ENCODE measurements at regions of chr7 and their contacts with region 1.

Region 1: GRCh38 chr7:131654668-131655326 is 98.4 kb upstream of the PODXL start:
- DNase-seq: peak; percentile 91
- H3K4me3 Mint-ChIP-seq: no peak overlapping the region
- H3K27ac Mint-ChIP-seq: no peak overlapping the region
- H3K4me1 Mint-ChIP-seq: no peaks in the 10 kb centered on the region
- H3K27me3 Mint-ChIP-seq: peaks cover 3% of the 10 kb centered on the region

Region 2: DNA sequence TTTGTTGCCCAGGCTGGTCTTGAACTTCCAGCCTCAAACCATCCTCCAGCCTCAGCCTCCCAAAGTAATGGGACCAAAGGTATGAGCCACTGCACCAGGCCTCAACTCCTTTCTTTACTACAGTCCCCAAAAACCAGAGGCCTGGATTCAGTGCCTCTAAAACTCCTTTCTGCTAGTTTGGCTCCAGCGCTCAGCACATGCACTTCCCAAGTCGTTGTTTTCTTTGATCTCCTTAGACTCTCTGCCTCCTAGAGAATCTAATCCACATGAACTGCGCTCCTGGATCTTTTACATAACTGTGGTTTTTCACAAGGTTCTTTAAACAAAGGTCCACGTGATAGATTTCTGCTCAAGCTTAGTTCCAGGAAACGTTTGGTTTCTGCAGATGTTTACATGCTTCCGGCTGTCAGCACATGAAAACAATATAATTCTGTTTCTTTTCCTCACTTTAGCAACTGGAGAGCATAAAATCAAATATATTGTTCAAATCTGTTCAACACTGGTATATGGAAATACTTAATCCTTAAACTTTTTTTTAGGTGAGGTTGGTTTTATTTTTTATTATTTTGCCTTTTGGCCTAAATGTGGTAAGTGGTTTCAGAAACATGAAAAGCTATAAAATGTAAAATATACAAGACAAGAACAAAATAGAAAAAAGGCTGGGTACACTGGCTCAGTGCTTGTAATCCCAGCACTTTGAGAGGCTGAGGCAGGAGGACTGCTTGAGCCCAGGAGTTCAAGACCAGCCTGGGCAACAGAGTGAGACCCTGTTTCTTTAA is 597.6 kb before region 1 on chr7:
- CTCF ChIA-PET with region 1: no interaction called
- intact Hi-C with region 1: loop called (anchors 10 kb)
- DNase-seq: peak; percentile 43
- H3K4me3 Mint-ChIP-seq: peak overlapping the region; percentile 66
- H3K27ac Mint-ChIP-seq: peak overlapping the region; percentile 98
- H3K4me1 Mint-ChIP-seq: peaks cover 65% of the 10 kb centered on the region
- H3K27me3 Mint-ChIP-seq: no peaks in the 10 kb centered on the region

Region 3: GRCh38 chr7:131507592-131508331 is 147.0 kb before region 1 on chr7:
- CTCF ChIA-PET with region 1: interaction called, 13 read pairs
- intact Hi-C with region 1: loop called (anchors 1 kb)
- DNase-seq: peak; percentile 91
- H3K4me3 Mint-ChIP-seq: no peak overlapping the region
- H3K27ac Mint-ChIP-seq: no peak overlapping the region
- H3K4me1 Mint-ChIP-seq: peaks cover 22% of the 10 kb centered on the region
- H3K27me3 Mint-ChIP-seq: peaks cover 8% of the 10 kb centered on the region

Region 4: DNA sequence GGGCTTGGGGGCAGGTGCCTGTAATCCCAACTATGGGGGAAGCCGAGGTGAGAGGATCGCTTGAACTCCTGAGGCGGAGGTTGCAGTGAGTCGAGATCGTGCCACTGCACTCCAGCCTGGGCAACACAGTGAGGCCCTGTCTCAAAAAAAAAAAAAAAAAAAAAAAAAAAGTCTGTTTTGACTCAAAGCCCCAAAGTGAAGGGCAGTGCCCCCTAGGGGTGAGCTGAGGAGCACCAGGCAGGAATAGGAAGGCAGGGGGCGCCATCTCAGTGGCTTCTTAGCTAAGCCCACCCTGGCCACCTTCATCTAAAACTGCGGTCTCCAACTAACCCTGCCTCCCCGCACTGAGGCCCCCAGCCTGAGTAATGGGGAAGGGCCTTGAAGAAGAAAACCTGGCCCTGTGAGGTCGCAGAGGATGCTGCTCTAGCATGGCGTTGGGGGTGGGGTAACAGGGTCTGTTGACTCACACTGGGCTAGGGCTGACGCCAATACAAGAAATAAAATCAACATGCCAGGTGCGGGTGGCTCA is 108.2 kb before region 1 on chr7:
- CTCF ChIA-PET with region 1: interaction called, 3 read pairs
- intact Hi-C with region 1: loop called (anchors 1 kb)
- DNase-seq: peak; percentile 72
- H3K4me3 Mint-ChIP-seq: no peak overlapping the region
- H3K27ac Mint-ChIP-seq: no peak overlapping the region
- H3K4me1 Mint-ChIP-seq: no peaks in the 10 kb centered on the region
- H3K27me3 Mint-ChIP-seq: peaks cover 5% of the 10 kb centered on the region

Region 5: DNA sequence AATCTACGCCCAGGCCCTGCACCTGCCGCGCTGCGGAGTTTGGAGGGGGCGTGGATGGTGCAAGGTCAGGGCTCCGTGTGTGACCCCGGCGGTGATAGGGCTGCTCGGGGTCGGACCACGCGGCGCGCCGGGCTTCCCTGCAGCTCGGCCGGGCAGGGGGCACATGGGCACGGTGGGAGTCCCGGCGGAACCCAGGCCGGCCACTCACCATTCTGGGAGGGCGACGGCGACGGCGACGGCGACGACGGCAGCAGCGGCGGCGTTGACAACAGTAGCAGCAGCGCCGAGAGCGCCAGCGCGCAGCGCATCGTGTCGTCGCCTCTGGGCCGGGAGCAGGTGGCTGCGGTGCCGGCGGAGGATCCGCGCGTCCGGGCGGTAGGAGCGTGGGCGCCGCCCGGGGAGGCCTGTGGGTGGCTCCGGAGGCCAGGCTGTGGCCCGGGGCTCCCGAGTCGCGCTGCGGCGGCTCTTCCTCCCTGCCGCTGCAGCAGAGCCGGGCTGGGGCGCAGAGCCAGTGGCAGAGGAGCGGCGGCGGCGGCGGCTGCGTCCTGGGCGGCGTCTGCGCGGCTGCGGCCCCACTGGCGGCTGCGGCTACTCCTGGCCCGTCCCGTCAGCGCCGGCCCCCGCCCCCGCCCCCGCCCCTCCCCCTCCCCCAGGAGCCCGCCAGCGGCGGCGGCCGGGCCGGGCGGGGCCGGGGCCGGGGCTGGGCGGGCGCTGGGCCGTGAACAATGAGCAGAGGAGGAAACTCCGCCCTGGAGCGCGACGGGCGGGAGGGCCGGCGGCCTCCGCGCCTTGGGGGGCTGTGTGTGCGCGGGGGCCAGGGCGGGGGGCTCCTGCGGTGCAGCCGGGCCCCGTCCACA is 98.5 kb before region 1 on chr7 and contains the start of gene PODXL:
- CTCF ChIA-PET with region 1: interaction called, 3 read pairs
- intact Hi-C with region 1: loop called (anchors 1 kb)
- DNase-seq: peak; percentile 60
- H3K4me3 Mint-ChIP-seq: peak within 1 kb of the TSS; percentile 67
- H3K27ac Mint-ChIP-seq: no peak within 1 kb of the TSS
- H3K4me1 Mint-ChIP-seq: peaks cover 12% of the 10 kb centered on the region
- H3K27me3 Mint-ChIP-seq: peaks cover 52% of the 10 kb centered on the region
- total RNA-seq, gene PODXL: 0.98 to 1.8 TPM

Region 6: DNA sequence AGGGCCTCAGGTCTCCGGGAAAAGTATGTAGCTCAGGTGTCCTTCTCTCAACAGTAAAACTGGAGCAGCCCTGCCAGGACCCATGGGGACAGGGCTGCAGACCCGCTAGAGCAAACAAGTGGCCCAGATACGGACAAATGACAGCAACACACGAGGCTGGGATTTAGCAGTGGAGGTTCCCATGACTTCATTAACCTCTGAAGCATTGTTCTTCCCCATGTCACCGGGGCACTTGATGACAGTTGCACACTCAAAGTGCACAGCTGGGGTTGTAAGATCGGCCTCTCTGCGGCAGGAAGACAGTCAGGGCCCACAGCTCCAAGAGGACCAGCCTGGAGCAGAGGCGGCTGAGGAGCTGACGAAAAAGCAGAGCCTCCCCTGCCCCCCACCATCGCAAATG is 85.8 kb before region 1 on chr7:
- CTCF ChIA-PET with region 1: no interaction called
- intact Hi-C with region 1: no loop called
- DNase-seq: no peak
- H3K4me3 Mint-ChIP-seq: no peak overlapping the region
- H3K27ac Mint-ChIP-seq: no peak overlapping the region
- H3K4me1 Mint-ChIP-seq: no peaks in the 10 kb centered on the region
- H3K27me3 Mint-ChIP-seq: no peaks in the 10 kb centered on the region

Region 7: DNA sequence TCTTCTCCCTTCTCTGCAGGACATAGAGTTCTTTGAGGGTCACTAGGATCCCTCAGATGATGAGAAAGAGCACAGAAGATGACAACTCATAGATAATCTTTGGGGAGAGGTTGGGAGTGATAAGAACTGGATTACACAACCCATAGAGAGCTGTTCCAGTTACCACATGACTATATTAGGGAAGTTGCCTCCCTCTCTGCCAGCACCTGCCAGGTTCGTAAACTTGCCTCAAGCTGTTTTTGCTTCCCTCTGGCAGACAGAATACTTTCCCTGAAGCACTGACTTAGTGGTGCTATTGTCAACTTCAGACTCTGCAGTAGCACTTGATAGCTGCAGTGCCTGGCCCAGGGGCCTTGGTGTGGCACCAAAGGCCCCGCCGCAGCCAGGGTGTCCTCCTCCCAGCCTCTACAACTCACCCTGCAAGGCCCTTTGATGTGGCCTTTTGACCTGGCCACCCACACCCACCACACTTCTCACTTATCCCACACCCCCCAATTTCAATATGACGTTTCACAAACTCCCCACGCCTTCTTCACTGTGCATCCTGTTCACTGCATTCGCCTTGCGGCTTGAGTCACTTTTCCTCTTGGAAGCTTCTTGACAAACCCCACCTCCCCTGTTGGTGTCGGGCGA is 48.4 kb before region 1 on chr7:
- CTCF ChIA-PET with region 1: no interaction called
- intact Hi-C with region 1: no loop called
- DNase-seq: no peak
- H3K4me3 Mint-ChIP-seq: no peak overlapping the region
- H3K27ac Mint-ChIP-seq: no peak overlapping the region
- H3K4me1 Mint-ChIP-seq: no peaks in the 10 kb centered on the region
- H3K27me3 Mint-ChIP-seq: peaks cover 5% of the 10 kb centered on the region

Region 8: DNA sequence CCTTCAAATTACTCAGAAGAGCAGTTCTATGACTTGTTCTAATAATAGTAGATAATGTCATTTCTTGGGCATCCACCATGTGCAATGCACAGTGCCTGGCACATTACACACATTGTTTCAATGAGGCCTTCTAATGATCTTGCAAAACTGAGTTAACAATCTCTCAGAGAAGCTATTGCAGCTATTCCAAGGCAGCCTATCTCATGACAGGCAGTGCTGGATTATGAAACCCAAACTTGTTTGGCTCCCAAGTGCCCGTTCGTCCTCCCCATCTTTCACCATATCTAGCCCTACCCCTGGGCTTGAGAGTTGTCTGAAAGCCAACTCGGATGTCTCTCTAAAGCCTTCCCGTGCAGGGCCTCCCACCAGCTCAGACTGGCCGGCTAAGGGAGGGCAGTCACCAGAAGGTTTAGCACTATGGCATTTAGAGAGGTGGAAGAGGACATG is 516.4 kb after region 1 on chr7:
- CTCF ChIA-PET with region 1: no interaction called
- intact Hi-C with region 1: no loop called
- DNase-seq: no peak
- H3K4me3 Mint-ChIP-seq: no peak overlapping the region
- H3K27ac Mint-ChIP-seq: no peak overlapping the region
- H3K4me1 Mint-ChIP-seq: no peaks in the 10 kb centered on the region
- H3K27me3 Mint-ChIP-seq: no peaks in the 10 kb centered on the region

Measured in activated naive CD4-positive, alpha-beta T cell treated with anti-CD3 and anti-CD28 coated beads for 36 hours (primary cell).